Psoas muscle (tissue), 8 donors: ENCODE measurements at regions of chr13 and their contacts with region 1.

Region 1: DNA sequence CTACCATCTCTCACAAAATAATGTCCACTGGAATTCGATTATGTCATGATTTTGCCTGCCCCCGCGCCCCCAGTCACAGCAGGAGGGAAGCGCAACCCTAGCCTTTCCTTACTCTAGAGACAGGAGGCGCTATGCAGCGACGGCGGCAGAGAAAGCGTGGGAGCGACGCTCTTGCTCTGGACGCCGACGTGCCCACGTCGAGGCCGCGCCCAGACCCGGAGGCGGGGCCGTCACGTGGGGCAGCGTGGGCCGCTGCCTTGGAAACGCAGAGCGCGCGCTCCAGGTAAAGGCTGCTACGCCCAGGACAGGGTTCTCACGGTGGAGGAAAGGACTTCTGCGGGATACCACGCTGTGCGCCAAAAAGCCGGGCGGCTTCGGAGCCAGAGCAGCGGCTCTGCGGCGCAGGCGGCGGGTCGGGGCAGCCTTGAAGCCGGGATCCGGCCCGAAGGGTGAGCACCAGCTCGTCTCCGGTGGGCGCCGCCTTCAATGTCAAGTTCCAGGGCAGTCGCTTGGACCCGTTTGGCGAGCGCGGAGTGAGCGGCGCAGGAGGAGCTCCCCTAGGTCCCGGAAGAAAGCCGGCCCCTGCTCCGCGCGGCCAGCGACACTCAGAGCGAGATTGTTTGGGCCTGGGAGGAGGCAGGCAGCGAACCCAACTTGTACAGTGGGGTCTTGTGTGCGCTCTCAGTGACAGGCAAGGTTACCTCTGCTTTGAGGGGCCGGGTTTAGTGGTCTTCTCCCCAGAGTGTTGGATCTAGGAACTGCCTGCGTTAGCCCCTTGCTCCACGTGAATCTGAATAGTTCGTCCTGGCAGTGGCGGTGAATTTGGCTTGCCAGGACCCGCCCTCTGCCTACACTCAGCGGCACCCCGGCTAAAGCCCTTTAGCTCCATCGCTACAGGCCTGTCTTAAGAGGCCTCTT is 121.7 kb downstream of the MRPL57 start:
- DNase-seq: peak; percentile 84 to 89
- ATAC-seq: peak; percentile 99 to 100 (median 100)
- H3K4me3 ChIP-seq: peak overlapping the region; percentile 95
- H3K27ac ChIP-seq: peak overlapping the region; percentile 49
- H3K4me1 ChIP-seq: peaks cover 11% of the 10 kb centered on the region
- H3K27me3 ChIP-seq: no peaks in the 10 kb centered on the region
- CTCF ChIP-seq: peak; percentile 83

Region 2: GRCh38 chr13:21344662-21345176 is 46.5 kb after region 1 on chr13:
- intact Hi-C with region 1: no loop called
- DNase-seq: no peak
- ATAC-seq: no peak
- H3K4me3 ChIP-seq: no peak overlapping the region
- H3K27ac ChIP-seq: no peak overlapping the region
- H3K4me1 ChIP-seq: no peaks in the 10 kb centered on the region
- H3K27me3 ChIP-seq: no peaks in the 10 kb centered on the region
- CTCF ChIP-seq: no peak

Region 3: GRCh38 chr13:21458813-21459701 is 160.9 kb after region 1 on chr13 and contains the start of gene ZDHHC20:
- intact Hi-C with region 1: loop called in 1 of 2 experiments (anchors 5 kb)
- DNase-seq: peak; percentile 89 to 95
- ATAC-seq: peak; percentile 96 to 98 (median 98)
- H3K4me3 ChIP-seq: peak within 1 kb of the TSS; percentile 71
- H3K27ac ChIP-seq: peak within 1 kb of the TSS; percentile 91
- H3K4me1 ChIP-seq: peaks cover 10% of the 10 kb centered on the region
- H3K27me3 ChIP-seq: no peaks in the 10 kb centered on the region
- CTCF ChIP-seq: no peak
- total RNA-seq, gene ZDHHC20: 10.8 to 16.9 (median 15.0) TPM